Activated naive CD4-positive, alpha-beta T cell treated with anti-CD3 and anti-CD28 coated beads for 36 hours (primary cell): ENCODE measurements at regions of chr13 and their contacts with region 1.

Region 1: GRCh38 chr13:41916173-41916954 is 44.5 kb downstream of the VWA8 start:
- DNase-seq: no peak
- H3K4me3 Mint-ChIP-seq: peak overlapping the region; percentile 59
- H3K27ac Mint-ChIP-seq: peak overlapping the region; percentile 95
- H3K4me1 Mint-ChIP-seq: peaks cover 60% of the 10 kb centered on the region
- H3K27me3 Mint-ChIP-seq: no peaks in the 10 kb centered on the region

Region 2: DNA sequence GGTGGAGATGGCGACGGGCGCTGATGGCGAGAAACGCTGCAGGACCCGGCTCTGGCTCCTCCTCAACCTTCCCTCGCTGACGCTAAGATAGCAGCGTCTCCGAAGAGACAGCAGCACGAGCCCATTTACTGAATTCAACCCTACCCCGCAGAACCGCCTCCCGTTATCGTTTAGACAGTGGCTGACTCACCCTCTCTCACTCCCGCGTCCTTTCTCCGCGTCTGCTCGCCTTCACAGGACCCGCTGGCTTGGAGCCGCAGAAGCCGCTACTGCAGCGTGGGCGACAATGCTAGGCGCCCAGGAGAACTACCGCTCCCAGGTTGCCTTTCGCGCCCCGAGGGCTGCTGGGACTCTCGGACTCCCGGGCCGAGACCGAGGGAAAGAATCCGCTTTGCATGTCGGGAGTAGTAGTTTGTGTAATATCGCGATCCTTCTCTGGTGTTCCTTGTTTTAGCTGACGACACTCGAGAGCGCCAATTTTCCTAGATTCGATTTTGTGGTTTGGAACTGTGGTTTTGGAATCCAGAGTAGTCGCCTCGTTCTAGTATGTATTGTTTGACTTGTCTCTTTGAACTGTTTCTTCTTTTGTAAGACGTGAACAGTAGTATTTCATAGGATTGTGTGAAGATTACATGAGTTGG is 783.7 kb before region 1 on chr13 and contains the start of gene KBTBD6:
- CTCF ChIA-PET with region 1: no interaction called
- intact Hi-C with region 1: loop called (anchors 5 kb)
- DNase-seq: peak; percentile 98
- H3K4me3 Mint-ChIP-seq: peak within 1 kb of the TSS; percentile 92
- H3K27ac Mint-ChIP-seq: peak within 1 kb of the TSS; percentile 87
- H3K4me1 Mint-ChIP-seq: peaks cover 35% of the 10 kb centered on the region
- H3K27me3 Mint-ChIP-seq: no peaks in the 10 kb centered on the region
- total RNA-seq, gene KBTBD6: 3.9 to 4.0 TPM

Region 3: DNA sequence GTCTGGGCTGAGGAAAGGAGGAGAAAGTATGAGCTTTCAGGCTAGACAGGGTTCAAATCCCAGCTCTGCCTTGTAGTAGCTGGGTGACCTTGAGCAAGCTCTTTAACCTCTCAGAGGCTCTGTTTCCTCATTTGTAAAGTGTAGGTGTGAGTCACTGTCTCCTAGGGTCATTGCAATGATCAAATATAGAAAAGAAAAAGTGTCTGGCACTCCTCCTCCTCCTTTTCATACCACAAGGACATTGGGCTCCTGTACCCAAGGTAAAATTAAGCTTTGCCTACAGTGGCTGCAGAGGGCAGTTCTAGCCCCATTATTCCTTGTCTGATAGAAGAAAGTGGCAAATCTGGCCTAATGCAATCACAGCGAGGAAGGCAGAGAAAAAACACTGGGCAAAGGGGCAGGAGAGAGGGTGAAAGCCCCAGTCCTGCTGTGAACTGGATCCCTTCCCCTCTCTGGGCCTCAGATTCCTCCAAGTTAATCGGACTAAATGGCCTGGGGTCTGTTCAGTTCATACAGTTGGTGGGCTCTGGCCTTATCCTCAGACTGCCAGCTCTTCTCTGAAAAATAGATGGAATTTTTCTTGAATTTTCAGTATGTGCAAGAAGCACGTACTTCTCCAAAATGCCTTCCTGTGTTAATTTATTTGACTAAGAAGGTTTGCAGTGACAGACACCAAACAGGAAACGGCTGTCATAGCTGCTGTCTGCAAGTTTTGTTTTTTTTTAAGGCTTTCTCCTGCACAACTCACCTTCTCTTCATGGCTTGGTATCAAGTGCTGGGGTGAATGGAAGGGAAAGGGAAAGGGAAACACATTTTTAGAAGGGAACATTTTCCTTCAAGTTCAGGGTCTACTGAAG is 423.7 kb before region 1 on chr13:
- CTCF ChIA-PET with region 1: no interaction called
- intact Hi-C with region 1: loop called (anchors 2 kb)
- DNase-seq: peak; percentile 62
- H3K4me3 Mint-ChIP-seq: peak overlapping the region; percentile 45
- H3K27ac Mint-ChIP-seq: peak overlapping the region; percentile 95
- H3K4me1 Mint-ChIP-seq: peaks cover 91% of the 10 kb centered on the region
- H3K27me3 Mint-ChIP-seq: no peaks in the 10 kb centered on the region

Region 4: DNA sequence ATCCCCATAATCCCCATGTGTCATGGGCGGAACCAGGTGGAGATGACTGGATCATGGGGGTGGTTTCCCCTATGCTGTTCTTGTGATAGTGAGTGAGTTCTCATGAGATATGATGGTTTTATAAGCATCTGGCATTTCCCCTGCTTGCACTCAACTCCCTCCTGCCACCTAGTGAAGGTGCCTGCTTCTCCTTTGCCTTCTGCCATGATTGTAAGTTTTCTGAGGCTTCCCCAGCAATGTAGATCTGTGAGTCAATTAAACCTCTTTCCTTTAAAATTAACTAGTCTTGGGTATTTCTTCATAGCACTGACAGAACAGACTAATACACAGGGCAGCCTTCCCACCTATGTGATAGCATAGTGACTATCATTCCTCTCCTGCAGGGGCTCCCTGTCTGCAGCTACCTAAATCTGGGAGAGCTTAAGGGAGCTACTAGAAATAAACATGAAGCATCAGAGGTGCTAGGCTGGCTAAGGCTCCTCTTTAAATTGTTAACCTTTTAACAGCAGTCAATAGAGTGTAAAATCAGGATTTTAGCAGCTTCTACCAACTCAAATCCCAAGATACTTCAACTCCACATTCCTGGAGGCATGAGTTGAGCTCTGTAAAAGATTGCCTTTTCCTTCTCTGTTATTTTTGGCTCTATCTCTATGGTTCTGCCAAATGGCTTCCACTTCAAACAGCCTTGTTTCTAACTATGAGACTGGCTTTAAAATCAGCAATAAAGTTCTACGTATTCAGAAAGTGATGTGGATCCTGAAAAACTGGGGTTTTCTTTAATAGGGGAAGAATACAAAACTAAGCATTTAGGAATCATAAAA is 67.7 kb before region 1 on chr13:
- CTCF ChIA-PET with region 1: no interaction called
- intact Hi-C with region 1: no loop called
- DNase-seq: peak; percentile 24
- H3K4me3 Mint-ChIP-seq: no peak overlapping the region
- H3K27ac Mint-ChIP-seq: no peak overlapping the region
- H3K4me1 Mint-ChIP-seq: no peaks in the 10 kb centered on the region
- H3K27me3 Mint-ChIP-seq: no peaks in the 10 kb centered on the region

Region 5: GRCh38 chr13:41960639-41961465 is 44.5 kb after region 1 on chr13 and contains the start of gene VWA8:
- CTCF ChIA-PET with region 1: interaction called, 3 read pairs
- intact Hi-C with region 1: loop called (anchors 1 kb)
- DNase-seq: peak; percentile 84
- H3K4me3 Mint-ChIP-seq: peak within 1 kb of the TSS; percentile 95
- H3K27ac Mint-ChIP-seq: peak within 1 kb of the TSS; percentile 92
- H3K4me1 Mint-ChIP-seq: peaks cover 53% of the 10 kb centered on the region
- H3K27me3 Mint-ChIP-seq: no peaks in the 10 kb centered on the region
- total RNA-seq, gene VWA8: 21.2 to 21.5 TPM

Region 6: DNA sequence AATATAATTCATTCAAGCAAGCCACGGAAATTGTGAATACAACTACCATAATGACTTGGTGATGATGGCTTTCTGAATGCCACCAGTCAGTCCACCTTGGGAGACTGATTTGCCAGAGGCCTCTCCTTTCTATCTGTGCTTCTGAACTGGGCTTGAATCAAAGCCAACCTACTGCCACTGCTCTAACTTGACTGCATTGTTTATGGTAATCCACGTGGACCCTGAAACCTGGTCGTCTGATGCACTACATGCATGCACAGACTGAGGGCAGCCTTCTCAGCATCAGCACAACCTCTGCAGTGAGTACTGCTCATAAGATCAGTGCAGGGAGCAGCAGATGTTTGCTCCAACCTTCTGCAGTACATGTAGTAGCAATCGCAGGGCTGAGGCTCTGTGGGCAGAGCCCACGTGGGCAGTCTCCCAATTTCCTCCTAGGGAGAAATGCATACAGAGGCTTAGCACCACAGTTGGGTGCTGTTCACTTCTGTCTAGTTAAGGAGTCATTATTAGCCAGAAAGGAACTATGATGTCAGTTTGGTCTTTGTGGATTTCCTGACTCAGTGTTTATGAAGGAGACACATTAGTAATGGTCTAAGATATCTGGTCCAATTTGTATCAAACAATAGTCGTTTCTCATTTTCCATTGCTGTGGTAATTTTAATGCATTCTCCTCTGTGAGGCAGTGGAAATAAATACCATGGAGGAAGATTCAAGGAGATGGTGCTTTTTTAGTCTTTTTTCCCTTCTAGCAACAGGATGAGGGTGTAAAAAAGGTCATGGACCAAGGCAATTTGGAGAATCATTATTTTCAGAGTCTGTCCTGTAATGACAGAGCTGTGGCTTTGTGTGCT is 438.1 kb after region 1 on chr13:
- CTCF ChIA-PET with region 1: no interaction called
- intact Hi-C with region 1: loop called (anchors 1 kb)
- DNase-seq: peak; percentile 67
- H3K4me3 Mint-ChIP-seq: peak overlapping the region; percentile 70
- H3K27ac Mint-ChIP-seq: peak overlapping the region; percentile 99
- H3K4me1 Mint-ChIP-seq: peaks cover 68% of the 10 kb centered on the region
- H3K27me3 Mint-ChIP-seq: no peaks in the 10 kb centered on the region

Region 7: GRCh38 chr13:42497798-42498197 is 581.4 kb after region 1 on chr13:
- CTCF ChIA-PET with region 1: no interaction called
- intact Hi-C with region 1: loop called (anchors 5 kb)
- DNase-seq: peak; percentile 64
- H3K4me3 Mint-ChIP-seq: no peak overlapping the region
- H3K27ac Mint-ChIP-seq: peak overlapping the region; percentile 69
- H3K4me1 Mint-ChIP-seq: peaks cover 40% of the 10 kb centered on the region
- H3K27me3 Mint-ChIP-seq: no peaks in the 10 kb centered on the region

Region 8: GRCh38 chr13:42747399-42747873 is 831.1 kb after region 1 on chr13:
- CTCF ChIA-PET with region 1: no interaction called
- intact Hi-C with region 1: no loop called
- DNase-seq: no peak
- H3K4me3 Mint-ChIP-seq: no peak overlapping the region
- H3K27ac Mint-ChIP-seq: no peak overlapping the region
- H3K4me1 Mint-ChIP-seq: no peaks in the 10 kb centered on the region
- H3K27me3 Mint-ChIP-seq: peaks cover 8% of the 10 kb centered on the region